ENCODE measurements at regions of chr3 and their contacts with region 1.

Region 1: DNA sequence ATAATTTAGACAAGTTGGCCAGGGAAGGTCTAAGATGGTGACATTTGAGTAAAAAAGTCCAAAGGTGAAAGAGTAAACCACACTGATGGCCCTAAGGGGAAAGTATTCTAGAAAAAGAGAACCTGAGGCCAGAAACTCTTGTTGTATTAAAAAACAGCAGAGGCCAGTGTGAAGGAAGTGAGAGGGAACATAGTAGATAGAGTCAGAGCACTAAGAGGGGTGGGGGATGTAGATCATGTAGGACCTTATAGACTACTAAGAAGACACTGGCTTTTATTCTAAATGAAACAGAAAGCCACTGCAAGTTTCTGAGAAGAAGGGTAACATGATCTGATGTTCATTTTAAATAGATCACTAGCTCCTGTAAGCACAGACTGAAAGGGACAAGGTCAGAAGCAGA is 14.5 kb downstream of the POLQ start:
- DNase-seq: no peak
- H3K4me3 ChIP-seq: no peak overlapping the region
- H3K27ac ChIP-seq: no peak overlapping the region
- H3K4me1 ChIP-seq: no peaks in the 10 kb centered on the region
- H3K27me3 ChIP-seq: no peaks in the 10 kb centered on the region
- CTCF ChIP-seq: no peak

Region 2: GRCh38 chr3:121488628-121489027 is 42.6 kb before region 1 on chr3:
- CTCF ChIA-PET with region 1: no interaction called
- dilution Hi-C with region 1: no loop called
- in situ Hi-C with region 1: no loop called
- intact Hi-C with region 1: loop called (anchors 1 kb)
- DNase-seq: peak; percentile 25
- H3K4me3 ChIP-seq: no peak overlapping the region
- H3K27ac ChIP-seq: no peak overlapping the region
- H3K4me1 ChIP-seq: peaks cover under 1% of the 10 kb centered on the region
- H3K27me3 ChIP-seq: no peaks in the 10 kb centered on the region
- CTCF ChIP-seq: peak; percentile 6 to 49

Region 3: GRCh38 chr3:121637922-121638321 is 106.7 kb after region 1 on chr3:
- CTCF ChIA-PET with region 1: no interaction called
- dilution Hi-C with region 1: no loop called
- in situ Hi-C with region 1: no loop called
- intact Hi-C with region 1: no loop called
- DNase-seq: no peak
- H3K4me3 ChIP-seq: no peak overlapping the region
- H3K27ac ChIP-seq: no peak overlapping the region
- H3K4me1 ChIP-seq: no peaks in the 10 kb centered on the region
- H3K27me3 ChIP-seq: no peaks in the 10 kb centered on the region
- CTCF ChIP-seq: no peak

Measured in mammary epithelial cell (primary cell).